Activated naive CD4-positive, alpha-beta T cell treated with anti-CD3 and anti-CD28 coated beads for 36 hours (primary cell): ENCODE measurements at regions of chr1 and their contacts with region 1.

Region 1: GRCh38 chr1:224736619-224737352 is 120.7 kb downstream of the CNIH3 start:
- DNase-seq: peak; percentile 36
- H3K4me3 Mint-ChIP-seq: no peak overlapping the region
- H3K27ac Mint-ChIP-seq: no peak overlapping the region
- H3K4me1 Mint-ChIP-seq: peaks cover 26% of the 10 kb centered on the region
- H3K27me3 Mint-ChIP-seq: no peaks in the 10 kb centered on the region

Region 2: DNA sequence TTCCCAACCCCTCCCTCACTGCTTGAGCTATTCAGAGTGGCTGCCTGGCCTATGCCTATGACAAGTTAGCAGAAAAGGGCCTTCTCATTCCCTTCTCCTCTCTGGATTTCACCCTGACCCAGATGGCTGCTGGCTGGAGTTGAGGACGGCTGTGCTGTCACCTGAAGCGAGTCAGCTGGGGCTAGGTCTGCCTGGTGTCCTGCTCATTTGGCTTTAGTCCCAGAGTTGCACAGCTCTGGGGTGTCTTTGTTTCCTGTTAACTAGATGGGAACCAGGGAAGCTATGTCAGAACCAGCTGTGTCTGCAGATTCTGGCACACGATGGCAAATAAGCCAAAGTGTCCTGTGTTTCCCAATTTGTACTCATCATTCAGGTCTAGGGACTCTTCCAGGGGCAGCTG is 67.8 kb before region 1 on chr1:
- CTCF ChIA-PET with region 1: no interaction called
- intact Hi-C with region 1: no loop called
- DNase-seq: no peak
- H3K4me3 Mint-ChIP-seq: no peak overlapping the region
- H3K27ac Mint-ChIP-seq: no peak overlapping the region
- H3K4me1 Mint-ChIP-seq: no peaks in the 10 kb centered on the region
- H3K27me3 Mint-ChIP-seq: no peaks in the 10 kb centered on the region

Region 3: DNA sequence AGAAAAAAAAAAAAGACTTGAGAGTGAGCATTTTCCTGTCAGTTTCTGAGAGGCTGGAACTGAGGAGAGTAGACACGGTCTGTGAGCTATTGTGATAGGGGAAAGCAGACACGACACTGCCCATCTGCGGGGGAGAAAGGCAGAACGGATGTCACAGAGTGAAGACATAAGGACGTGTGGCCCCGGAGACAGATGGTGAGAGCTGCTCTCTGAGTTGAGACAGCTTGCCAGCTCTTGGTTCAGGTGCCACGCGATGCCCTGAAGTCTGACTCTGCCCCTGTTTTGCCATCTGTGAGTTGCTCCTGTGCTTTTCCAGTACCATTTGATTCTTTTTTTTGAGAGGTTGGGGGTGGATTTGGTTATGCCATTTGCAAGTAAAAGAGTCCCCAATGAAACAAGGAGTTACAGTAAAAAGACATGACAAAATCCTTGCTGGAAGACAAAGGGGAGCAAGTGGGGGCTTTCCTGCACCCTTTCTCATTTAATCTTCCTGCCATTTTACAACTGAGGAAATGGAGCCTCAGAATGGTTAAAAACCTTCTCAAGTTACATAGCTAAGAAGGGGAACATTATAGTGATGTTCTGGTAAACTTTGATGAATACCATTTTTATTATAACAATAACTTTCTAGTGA is 63.8 kb after region 1 on chr1:
- CTCF ChIA-PET with region 1: no interaction called
- intact Hi-C with region 1: loop called (anchors 5 kb)
- DNase-seq: no peak
- H3K4me3 Mint-ChIP-seq: no peak overlapping the region
- H3K27ac Mint-ChIP-seq: no peak overlapping the region
- H3K4me1 Mint-ChIP-seq: peaks cover 10% of the 10 kb centered on the region
- H3K27me3 Mint-ChIP-seq: peaks cover 3% of the 10 kb centered on the region